ENCODE measurements at regions of chr15 and their contacts with region 1.

Region 1: GRCh38 chr15:90306560-90306959 is 41.1 kb downstream of the NGRN start:
- DNase-seq: peak; percentile 60
- ATAC-seq: peak; percentile 84
- H3K4me3 Mint-ChIP-seq: peak overlapping the region; percentile 42
- H3K27ac Mint-ChIP-seq: peak overlapping the region; percentile 88
- H3K4me1 Mint-ChIP-seq: peaks cover 32% of the 10 kb centered on the region
- H3K27me3 Mint-ChIP-seq: peaks cover 4% of the 10 kb centered on the region

Region 2: GRCh38 chr15:90291679-90292356 is 14.7 kb before region 1 on chr15:
- CTCF ChIA-PET with region 1: interaction called, 50 read pairs
- POLR2A ChIA-PET with region 1: no interaction called
- DNase-seq: peak; percentile 38
- ATAC-seq: no peak
- H3K4me3 Mint-ChIP-seq: no peak overlapping the region
- H3K27ac Mint-ChIP-seq: no peak overlapping the region
- H3K4me1 Mint-ChIP-seq: peaks cover 16% of the 10 kb centered on the region
- H3K27me3 Mint-ChIP-seq: peaks cover 6% of the 10 kb centered on the region

Region 3: GRCh38 chr15:90412356-90413194 is 106.0 kb after region 1 on chr15:
- CTCF ChIA-PET with region 1: no interaction called
- POLR2A ChIA-PET with region 1: no interaction called
- DNase-seq: peak; percentile 54
- ATAC-seq: peak; percentile 57
- H3K4me3 Mint-ChIP-seq: peak overlapping the region; percentile 37
- H3K27ac Mint-ChIP-seq: peak overlapping the region; percentile 74
- H3K4me1 Mint-ChIP-seq: peaks cover 78% of the 10 kb centered on the region
- H3K27me3 Mint-ChIP-seq: no peaks in the 10 kb centered on the region